ENCODE measurements at regions of chr4 and their contacts with region 1.

Region 1: DNA sequence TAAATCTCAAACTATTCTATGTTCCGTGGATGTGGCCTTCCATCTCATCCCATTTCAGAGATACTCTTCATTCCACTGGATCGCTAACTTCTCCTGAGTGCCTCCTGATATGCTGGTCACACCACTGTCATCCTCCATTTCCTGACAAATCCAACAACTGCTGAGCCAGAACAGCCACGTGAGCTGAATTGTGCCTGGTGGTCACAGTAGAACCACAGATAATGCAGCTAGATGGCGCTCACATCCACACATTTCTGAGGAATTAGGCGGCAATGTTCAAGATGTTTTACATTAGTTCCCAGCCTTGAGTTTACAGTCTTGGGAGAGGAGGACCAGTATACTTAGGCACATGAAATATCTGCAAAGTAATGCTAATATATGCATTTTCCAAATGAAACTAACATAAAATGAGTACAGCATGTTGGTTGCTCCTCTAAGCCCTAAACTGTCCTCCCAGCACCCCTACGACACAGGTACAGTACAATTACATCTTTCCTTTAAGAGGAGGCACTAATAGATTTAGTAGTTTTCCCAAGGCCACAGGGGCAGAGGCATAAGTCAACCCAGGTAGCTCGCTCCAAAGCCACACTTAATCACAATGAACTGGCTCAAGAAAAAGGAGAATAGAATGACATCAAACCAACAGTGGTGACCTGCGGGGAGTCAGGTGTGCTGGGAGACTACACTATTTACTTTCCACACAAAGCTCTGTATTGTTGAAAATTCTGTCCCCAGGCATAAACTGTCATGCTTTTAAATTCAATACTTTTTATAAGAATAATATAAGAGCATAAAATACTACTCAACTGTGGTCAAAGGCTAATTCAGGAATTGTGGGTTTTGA is 134.2 kb downstream of the CHIC2 start:
- DNase-seq: peak; percentile 68
- H3K4me3 Mint-ChIP-seq: no peak overlapping the region
- H3K27ac Mint-ChIP-seq: no peak overlapping the region
- H3K4me1 Mint-ChIP-seq: no peaks in the 10 kb centered on the region
- H3K27me3 Mint-ChIP-seq: peaks cover 4% of the 10 kb centered on the region

Region 2: GRCh38 chr4:53777244-53777984 is 152.8 kb before region 1 on chr4:
- CTCF ChIA-PET with region 1: no interaction called
- POLR2A ChIA-PET with region 1: no interaction called
- intact Hi-C with region 1: no loop called
- DNase-seq: no peak
- H3K4me3 Mint-ChIP-seq: no peak overlapping the region
- H3K27ac Mint-ChIP-seq: no peak overlapping the region
- H3K4me1 Mint-ChIP-seq: no peaks in the 10 kb centered on the region
- H3K27me3 Mint-ChIP-seq: peaks cover 4% of the 10 kb centered on the region

Region 3: GRCh38 chr4:53908661-53909078 is 21.5 kb before region 1 on chr4:
- CTCF ChIA-PET with region 1: interaction called, 15 read pairs
- POLR2A ChIA-PET with region 1: no interaction called
- intact Hi-C with region 1: loop called (anchors 1 kb)
- DNase-seq: no peak
- H3K4me3 Mint-ChIP-seq: no peak overlapping the region
- H3K27ac Mint-ChIP-seq: no peak overlapping the region
- H3K4me1 Mint-ChIP-seq: peaks cover 12% of the 10 kb centered on the region
- H3K27me3 Mint-ChIP-seq: peaks cover 47% of the 10 kb centered on the region

Region 4: DNA sequence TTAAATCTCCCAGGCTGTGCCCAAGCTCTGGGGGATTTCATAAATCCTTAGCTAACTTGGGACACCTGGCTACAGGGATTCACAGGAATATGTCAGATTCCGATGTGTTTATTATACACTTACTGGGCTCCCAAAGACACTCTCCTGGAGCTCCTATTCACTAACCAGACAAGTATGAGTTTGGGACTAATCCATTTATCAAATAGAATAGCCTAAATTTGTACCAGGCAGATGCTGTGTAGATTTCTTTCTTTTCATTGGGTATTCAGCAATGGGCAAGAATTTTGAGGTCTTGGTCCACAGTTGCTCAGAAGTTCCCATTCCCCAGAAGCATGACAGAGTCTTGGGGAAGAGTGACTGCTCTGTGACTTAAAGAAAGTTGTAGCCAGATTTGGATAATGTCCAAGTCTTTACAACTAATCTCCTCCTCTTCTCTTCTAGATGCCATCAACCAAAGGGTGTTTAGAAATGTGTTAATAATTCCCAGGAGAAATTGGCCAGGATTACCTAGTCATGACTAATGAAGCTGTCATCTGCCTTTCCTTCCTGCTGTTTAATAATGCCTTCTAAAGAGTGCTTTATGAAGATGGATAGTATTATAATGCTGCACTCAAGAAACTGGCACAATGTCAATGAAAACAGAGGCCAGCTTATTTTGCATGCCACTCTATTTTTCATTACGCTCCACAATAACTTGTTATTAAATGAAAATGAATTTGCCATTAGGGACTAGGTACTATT is 13.3 kb after region 1 on chr4:
- CTCF ChIA-PET with region 1: interaction called, 33 read pairs
- POLR2A ChIA-PET with region 1: no interaction called
- intact Hi-C with region 1: no loop called
- DNase-seq: no peak
- H3K4me3 Mint-ChIP-seq: no peak overlapping the region
- H3K27ac Mint-ChIP-seq: no peak overlapping the region
- H3K4me1 Mint-ChIP-seq: no peaks in the 10 kb centered on the region
- H3K27me3 Mint-ChIP-seq: no peaks in the 10 kb centered on the region

Region 5: DNA sequence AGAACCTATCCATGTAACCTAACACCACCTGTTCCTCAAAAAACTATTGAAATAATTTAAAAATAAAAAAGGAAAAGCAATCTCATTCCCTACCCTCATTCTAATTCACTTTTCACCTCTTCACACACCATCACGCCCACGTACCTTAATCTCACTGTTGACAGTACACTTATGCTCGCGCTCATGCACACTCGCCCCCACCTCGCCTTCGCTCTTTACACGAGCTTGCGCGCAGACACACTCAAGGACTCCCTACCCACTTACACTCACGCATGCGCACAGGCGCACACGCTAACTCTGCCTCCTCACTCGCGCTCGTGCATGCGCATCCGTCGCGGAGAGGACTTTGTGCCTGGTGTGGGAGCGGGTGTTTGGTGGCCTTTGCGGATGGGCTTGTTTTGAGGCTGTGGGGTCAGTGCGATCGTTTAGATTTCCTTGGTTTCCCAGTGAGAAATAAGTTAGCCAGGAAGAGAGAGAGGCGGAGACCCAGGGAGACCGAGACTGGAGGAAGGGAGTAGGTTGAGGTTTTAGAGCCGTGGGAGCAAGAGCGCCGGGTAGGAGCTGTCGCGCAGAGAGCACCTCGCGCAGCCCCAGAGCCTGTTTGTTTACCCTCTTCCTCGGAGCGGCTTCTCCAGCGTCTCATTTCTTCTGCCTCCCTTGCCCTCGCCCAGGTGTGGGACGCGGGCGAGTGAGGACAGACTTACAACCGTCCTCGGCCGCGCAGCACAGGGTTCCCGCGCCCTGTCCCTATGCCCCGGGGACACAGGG is 161.6 kb after region 1 on chr4:
- CTCF ChIA-PET with region 1: interaction called, 3 read pairs
- POLR2A ChIA-PET with region 1: no interaction called
- intact Hi-C with region 1: loop called (anchors 1 kb)
- DNase-seq: peak; percentile 80
- H3K4me3 Mint-ChIP-seq: peak overlapping the region; percentile 76
- H3K27ac Mint-ChIP-seq: no peak overlapping the region
- H3K4me1 Mint-ChIP-seq: peaks cover 25% of the 10 kb centered on the region
- H3K27me3 Mint-ChIP-seq: peaks cover 54% of the 10 kb centered on the region

Region 6: DNA sequence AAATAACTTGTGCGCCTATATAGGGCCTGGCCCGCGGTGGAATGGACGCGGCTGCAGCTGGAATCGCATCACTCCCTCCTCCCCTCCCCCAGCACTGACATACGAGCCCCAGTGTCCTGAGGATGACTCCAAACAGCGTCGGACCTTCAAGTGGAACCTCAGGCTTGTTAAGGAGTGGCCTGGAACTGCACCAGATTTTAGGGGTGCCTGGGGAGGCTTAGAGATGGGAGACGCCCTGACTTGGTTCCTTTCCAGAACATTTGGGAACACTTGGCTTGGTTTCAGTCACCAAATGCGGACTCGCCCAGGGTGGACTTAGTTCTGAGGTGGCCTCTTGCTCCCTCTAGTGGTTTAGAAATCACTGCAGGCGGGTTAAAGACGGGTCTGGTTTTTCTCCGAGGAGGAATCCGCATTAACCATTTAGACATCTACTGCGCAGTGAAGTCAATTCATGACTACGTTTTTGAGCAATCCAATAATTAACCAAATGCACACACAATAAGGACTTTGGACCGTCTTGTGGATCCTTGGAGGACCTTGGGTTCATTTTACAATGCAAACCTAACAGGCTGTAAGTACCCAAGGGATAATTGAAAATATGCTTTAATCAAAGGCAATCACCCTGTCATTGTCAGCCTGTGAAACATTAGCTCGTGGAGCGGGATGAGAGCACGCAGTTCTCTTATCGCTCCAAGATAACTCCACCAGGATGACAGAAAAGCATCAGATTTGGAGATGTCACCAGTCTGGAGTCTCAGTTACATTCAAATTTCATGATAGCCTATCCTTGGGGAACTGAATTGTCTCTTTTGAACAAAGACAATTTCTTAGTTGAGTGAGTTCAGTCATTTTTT is 287.7 kb after region 1 on chr4:
- CTCF ChIA-PET with region 1: interaction called, 145 read pairs
- POLR2A ChIA-PET with region 1: no interaction called
- intact Hi-C with region 1: loop called (anchors 1 kb)
- DNase-seq: peak; percentile 59
- H3K4me3 Mint-ChIP-seq: no peak overlapping the region
- H3K27ac Mint-ChIP-seq: no peak overlapping the region
- H3K4me1 Mint-ChIP-seq: peaks cover 6% of the 10 kb centered on the region
- H3K27me3 Mint-ChIP-seq: peaks cover 31% of the 10 kb centered on the region

Region 7: DNA sequence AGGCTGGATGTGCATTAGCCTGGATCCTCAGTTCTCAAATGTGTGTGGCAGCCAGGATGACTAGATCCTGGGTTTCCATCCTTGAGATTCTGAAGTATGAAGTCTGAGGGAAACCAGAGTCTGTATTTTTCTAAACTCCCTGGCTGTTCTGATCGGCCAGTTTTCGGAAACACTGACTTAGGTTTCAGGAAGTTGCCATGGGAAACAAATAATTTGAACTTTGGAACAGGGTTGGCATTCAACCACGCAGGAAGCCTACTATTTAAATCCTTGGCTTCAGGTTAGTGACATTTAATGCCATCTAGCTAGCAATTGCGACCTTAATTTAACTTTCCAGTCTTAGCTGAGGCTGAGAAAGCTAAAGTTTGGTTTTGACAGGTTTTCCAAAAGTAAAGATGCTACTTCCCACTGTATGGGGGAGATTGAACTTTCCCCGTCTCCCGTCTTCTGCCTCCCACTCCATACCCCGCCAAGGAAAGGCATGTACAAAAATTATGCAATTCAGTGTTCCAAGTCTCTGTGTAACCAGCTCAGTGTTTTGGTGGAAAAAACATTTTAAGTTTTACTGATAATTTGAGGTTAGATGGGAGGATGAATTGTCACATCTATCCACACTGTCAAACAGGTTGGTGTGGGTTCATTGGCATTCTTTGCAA is 366.5 kb after region 1 on chr4:
- CTCF ChIA-PET with region 1: no interaction called
- POLR2A ChIA-PET with region 1: no interaction called
- intact Hi-C with region 1: no loop called
- DNase-seq: no peak
- H3K4me3 Mint-ChIP-seq: no peak overlapping the region
- H3K27ac Mint-ChIP-seq: no peak overlapping the region
- H3K4me1 Mint-ChIP-seq: no peaks in the 10 kb centered on the region
- H3K27me3 Mint-ChIP-seq: peaks cover 6% of the 10 kb centered on the region

Measured in activated CD4-positive, alpha-beta memory T cell treated with anti-CD3 and anti-CD28 coated beads for 36 hours (primary cell).